ENCODE measurements at regions of chr9 and their contacts with region 1.

Region 1: DNA sequence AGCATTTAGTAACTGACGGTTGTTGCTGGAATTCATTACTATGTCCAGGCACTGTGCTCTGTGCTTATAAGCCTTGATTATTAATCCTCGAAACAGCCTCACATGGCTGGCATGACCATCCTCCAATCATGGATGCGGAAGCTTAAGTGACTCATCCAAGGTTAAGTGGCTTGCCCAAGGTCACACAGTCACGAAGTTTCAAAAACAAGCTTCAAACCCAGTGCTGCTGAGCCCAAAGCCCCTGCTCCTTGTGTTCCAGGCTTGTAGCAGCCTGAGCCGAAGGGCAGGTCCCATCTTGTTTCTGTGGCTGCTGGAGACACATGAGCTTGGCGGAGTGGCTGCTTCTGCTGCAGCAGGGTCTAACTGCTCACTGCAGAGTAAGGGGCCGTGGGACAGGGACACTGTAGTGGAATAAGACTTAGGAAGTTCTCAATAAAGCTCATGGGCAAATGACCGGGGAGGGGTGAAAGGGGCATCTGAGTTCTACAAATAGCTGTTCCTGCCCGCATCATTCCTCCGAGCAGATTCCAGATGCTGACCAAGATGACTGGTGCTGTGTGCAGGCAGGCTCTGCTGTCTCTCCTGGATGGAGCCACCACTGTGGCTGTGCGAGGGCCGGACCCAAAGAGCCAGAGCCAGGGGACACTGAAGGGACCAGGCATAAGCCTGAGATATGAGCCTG is 32.4 kb downstream of the WHRN start:
- DNase-seq: no peak
- H3K4me3 ChIP-seq: no peak overlapping the region
- H3K27ac ChIP-seq: no peak overlapping the region
- H3K4me1 ChIP-seq: peaks cover 0 to 9% (median 7%) of the 10 kb centered on the region in 4 experiments
- H3K27me3 ChIP-seq: peaks cover 0 to 2% (median 0%) of the 10 kb centered on the region in 5 experiments

Region 2: GRCh38 chr9:114356792-114357191 is 116.1 kb before region 1 on chr9:
- CTCF ChIA-PET with region 1: no interaction called
- POLR2A ChIA-PET with region 1: no interaction called
- DNase-seq: no peak
- H3K4me3 ChIP-seq: no peak overlapping the region
- H3K27ac ChIP-seq: no peak overlapping the region
- H3K4me1 ChIP-seq: no peaks in the 10 kb centered on the region
- H3K27me3 ChIP-seq: no peaks in the 10 kb centered on the region

Region 3: DNA sequence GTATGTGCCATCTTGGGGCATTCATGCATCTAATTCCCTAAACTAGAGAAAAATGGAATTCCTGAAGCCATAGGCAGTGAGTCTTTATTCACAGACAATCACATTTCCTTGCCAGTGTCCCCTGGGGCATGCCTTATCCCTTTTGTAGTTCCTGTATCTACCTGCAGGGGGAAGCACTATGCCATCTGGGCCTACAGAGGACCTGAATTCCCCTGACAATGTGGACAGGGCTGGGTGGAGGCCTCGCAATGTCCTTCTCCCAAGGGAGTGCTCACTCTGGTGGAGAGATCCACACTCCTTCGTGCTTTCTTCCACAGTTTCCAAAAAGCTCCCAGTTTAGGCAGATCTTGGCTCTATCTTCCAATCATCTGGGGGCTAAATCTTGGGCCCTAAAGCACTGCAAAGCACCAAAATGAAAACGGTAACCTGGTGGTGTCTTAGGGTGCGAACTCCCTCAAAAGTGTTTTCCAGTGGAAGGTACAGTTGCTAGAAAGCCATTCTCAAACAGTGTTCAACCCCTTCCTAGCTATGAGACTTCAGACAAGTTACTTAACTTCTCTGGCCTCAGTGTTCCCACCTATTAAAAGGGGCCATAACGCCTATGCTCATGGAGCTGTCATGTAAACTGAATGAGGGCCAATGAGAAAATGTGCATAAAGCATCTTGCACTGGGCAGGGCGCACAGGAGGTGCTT is 14.8 kb after region 1 on chr9:
- CTCF ChIA-PET with region 1: interaction called, 37 read pairs
- POLR2A ChIA-PET with region 1: no interaction called
- DNase-seq: peak; percentile 60 to 80 (median 72)
- H3K4me3 ChIP-seq: no peak overlapping the region
- H3K27ac ChIP-seq: no peak overlapping the region
- H3K4me1 ChIP-seq: peaks cover 0 to 6% (median 1%) of the 10 kb centered on the region in 4 experiments
- H3K27me3 ChIP-seq: no peaks in the 10 kb centered on the region

Measured in common myeloid progenitor, CD34-positive (primary cell).